Activated CD4-positive, alpha-beta memory T cell treated with anti-CD3 and anti-CD28 coated beads for 36 hours (primary cell): ENCODE measurements at regions of chr3 and their contacts with region 1.

Region 1: DNA sequence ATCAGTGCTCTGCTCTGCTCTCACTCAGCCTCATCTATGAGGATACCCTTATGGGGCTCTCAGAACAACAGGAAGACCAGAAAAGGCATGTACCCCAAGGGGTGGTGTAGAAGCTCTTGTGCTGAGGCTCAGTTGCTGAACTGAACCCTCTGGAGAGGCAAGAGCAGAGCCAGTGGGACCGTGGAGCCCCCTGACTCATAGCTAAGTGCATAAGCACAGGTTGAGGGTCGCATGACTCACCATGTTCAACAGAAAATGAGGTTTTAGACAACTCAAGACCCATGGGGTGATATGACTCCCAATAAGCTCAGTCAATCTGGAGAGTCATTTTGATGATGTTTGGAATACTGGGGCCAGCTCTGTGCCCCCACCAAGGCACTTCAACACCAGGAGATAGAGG is 37.3 kb downstream of the CRYGS start:
- DNase-seq: peak; percentile 65
- H3K4me3 Mint-ChIP-seq: no peak overlapping the region
- H3K27ac Mint-ChIP-seq: no peak overlapping the region
- H3K4me1 Mint-ChIP-seq: peaks cover 36% of the 10 kb centered on the region
- H3K27me3 Mint-ChIP-seq: peaks cover 2% of the 10 kb centered on the region

Region 2: GRCh38 chr3:186162221-186162620 is 344.6 kb before region 1 on chr3:
- CTCF ChIA-PET with region 1: no interaction called
- POLR2A ChIA-PET with region 1: no interaction called
- intact Hi-C with region 1: no loop called
- DNase-seq: no peak
- H3K4me3 Mint-ChIP-seq: no peak overlapping the region
- H3K27ac Mint-ChIP-seq: no peak overlapping the region
- H3K4me1 Mint-ChIP-seq: no peaks in the 10 kb centered on the region
- H3K27me3 Mint-ChIP-seq: peaks cover 35% of the 10 kb centered on the region

Region 3: GRCh38 chr3:186520957-186521842 is 14.3 kb after region 1 on chr3:
- CTCF ChIA-PET with region 1: interaction called, 4 read pairs
- POLR2A ChIA-PET with region 1: interaction called, 3 read pairs
- intact Hi-C with region 1: loop called (anchors 1 kb)
- DNase-seq: peak; percentile 88
- H3K4me3 Mint-ChIP-seq: peak overlapping the region; percentile 50
- H3K27ac Mint-ChIP-seq: peak overlapping the region; percentile 81
- H3K4me1 Mint-ChIP-seq: peaks cover 62% of the 10 kb centered on the region
- H3K27me3 Mint-ChIP-seq: no peaks in the 10 kb centered on the region